Ovary (tissue), 10 donors: ENCODE measurements at regions of chr1 and their contacts with region 1.

Region 1: GRCh38 chr1:226912587-226913176 is 27.4 kb upstream of the COQ8A start:
- DNase-seq: peak; percentile 35 to 67 (median 50)
- H3K4me3 ChIP-seq: no peak overlapping the region
- H3K27ac ChIP-seq: no peak overlapping the region
- H3K4me1 ChIP-seq: no peaks in the 10 kb centered on the region
- H3K27me3 ChIP-seq: no peaks in the 10 kb centered on the region
- CTCF ChIP-seq: peak in 2 of 3 donors; percentile 17 to 19
- EP300 ChIP-seq: no peak
- POLR2A ChIP-seq: no peak

Region 2: DNA sequence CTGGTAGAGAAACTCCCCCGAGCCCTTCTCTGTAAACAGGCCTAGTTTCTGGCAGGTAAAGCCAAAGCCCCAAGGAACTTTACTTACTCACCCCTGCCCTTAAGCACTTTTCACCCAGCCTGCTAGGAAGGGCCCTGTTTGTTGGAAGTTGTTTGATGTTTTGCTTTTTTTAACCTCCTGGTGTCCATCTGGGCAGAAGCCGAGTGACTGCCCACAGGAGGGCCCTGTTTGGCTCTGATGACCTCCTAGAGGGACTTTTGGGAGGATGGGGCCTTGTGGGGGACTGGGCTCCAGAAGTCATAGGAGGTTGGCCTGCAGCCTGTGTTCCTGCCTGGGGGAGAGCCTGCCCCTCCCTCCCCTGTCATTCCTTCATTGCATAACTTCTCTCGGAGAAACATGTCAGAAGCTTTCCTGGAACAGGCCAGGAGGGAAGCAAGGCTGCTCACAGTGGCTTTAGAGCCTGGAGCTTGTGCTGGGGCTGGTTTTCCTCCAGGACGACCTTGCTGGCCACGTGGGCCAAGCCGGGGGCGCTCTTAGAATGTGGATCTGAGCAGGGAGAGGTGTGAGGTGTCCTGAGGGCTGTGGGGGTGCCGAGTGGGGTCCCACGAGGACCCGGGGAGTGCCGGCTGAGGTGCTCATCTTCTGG is 61.3 kb after region 1 on chr1:
- intact Hi-C with region 1: no loop called
- DNase-seq: peak; percentile 75 to 88 (median 84)
- H3K4me3 ChIP-seq: no peak overlapping the region
- H3K27ac ChIP-seq: peak overlapping the region; percentile 23 to 93
- H3K4me1 ChIP-seq: peaks cover 23% of the 10 kb centered on the region
- H3K27me3 ChIP-seq: no peaks in the 10 kb centered on the region
- CTCF ChIP-seq: peak in 2 of 3 donors; percentile 29 to 30
- EP300 ChIP-seq: peak; percentile 91
- POLR2A ChIP-seq: peak; percentile 38

Region 3: DNA sequence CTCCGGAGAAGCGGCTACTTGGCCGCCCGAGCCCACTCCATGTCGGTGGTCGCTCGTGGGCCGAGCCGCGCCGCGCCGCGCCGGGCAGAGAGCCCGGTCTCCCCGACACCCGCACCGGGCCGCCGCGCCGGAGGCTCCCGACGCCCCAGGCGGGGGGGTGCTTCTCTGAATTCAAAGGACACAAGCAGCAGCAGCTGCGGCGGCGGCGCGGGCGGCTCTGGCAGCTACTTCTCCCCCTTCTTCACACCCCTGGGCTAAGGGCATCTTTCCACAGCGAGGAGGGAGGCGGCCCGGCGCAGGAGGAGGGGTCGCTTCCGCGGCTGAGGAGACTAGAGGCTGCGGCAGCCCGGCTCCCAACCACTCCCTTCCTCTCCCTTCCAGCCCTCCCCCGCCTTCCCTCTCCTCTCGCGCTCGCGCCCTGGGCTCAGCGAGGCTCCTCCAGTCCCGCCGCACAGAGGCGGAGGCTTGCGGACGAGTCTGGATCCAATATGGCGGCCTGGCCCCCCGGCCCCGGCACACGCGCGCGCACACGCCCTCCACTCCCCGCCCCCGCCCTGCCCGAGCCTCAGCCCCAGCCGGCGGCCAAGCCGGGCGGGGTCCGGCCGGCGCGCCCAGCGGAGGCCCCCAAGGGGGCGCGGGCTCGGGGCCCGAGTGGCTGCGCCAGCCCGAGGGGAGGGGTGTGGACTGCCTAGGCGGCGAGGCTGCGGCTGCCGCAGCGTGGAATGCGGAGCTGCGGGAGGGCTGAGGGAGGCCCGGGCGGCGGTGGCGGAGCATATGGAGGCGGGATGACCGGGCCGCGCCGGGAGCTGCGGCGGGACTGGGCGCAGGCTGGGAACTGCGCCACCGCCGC is 405.5 kb after region 1 on chr1 and contains the start of gene CDC42BPA:
- intact Hi-C with region 1: loop called in 1 of 4 experiments (anchors 5 kb)
- DNase-seq: peak; percentile 80 to 89 (median 84)
- H3K4me3 ChIP-seq: peak within 1 kb of the TSS; percentile 85
- H3K27ac ChIP-seq: peak within 1 kb of the TSS; percentile 97 to 98
- H3K4me1 ChIP-seq: no peaks in the 10 kb centered on the region
- H3K27me3 ChIP-seq: no peaks in the 10 kb centered on the region
- CTCF ChIP-seq: no peak
- EP300 ChIP-seq: no peak
- POLR2A ChIP-seq: peak; percentile 27
- total RNA-seq, gene CDC42BPA: 32.9 to 56.2 (median 40.8) TPM

Region 4: DNA sequence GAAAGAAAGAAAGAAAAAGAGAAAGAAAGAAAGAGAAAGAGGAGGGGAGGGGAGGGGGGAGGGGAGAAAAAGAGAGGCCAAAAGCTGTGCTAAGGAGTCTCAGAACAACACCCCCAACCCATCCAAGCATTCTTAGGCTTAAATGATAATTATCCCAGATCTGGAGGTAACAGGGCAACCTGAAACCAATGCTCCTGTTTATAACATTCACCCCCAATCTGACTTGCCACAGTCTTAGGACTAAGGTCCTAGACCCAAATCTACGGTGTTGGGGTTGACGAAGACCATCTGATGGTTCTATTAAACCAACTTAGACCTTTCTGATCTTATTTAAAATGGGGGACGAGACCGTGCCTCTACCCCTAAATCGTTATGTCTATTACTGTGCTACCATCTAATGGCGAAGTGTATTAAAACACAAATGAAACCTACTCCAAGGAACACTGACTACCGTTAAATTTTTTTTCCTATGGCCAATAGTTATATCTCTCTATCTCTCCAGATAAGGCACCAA is 524.9 kb after region 1 on chr1:
- intact Hi-C with region 1: loop called in 2 of 4 experiments (anchors 5 to 10 kb)
- DNase-seq: no peak
- H3K4me3 ChIP-seq: peak overlapping the region; percentile 30
- H3K27ac ChIP-seq: no peak overlapping the region
- H3K4me1 ChIP-seq: peaks cover 9% of the 10 kb centered on the region
- H3K27me3 ChIP-seq: no peaks in the 10 kb centered on the region
- CTCF ChIP-seq: peak in 2 of 3 donors; percentile 54 to 57
- EP300 ChIP-seq: no peak
- POLR2A ChIP-seq: no peak